ENCODE measurements at regions of chr3 and their contacts with region 1.

Region 1: GRCh38 chr3:178325330-178325729 is 210.9 kb upstream of the KCNMB2 start:
- DNase-seq: no peak
- H3K4me3 ChIP-seq: no peak overlapping the region
- H3K27ac ChIP-seq: peak overlapping the region in 2 of 4 donors; percentile 5 to 33
- H3K4me1 ChIP-seq: peaks cover 0 to 26% (median 19%) of the 10 kb centered on the region in 4 donors
- H3K27me3 ChIP-seq: no peaks in the 10 kb centered on the region
- CTCF ChIP-seq: peak in 2 of 4 experiments; percentile 36 to 47
- EP300 ChIP-seq: no peak
- POLR2A ChIP-seq: no peak

Region 2: GRCh38 chr3:177041021-177041729 is 1284.2 kb before region 1 on chr3:
- intact Hi-C with region 1: loop called (anchors 5 kb)
- DNase-seq: peak; percentile 84
- H3K4me3 ChIP-seq: no peak overlapping the region
- H3K27ac ChIP-seq: peak overlapping the region in 3 of 4 donors; percentile 78 to 79 (median 79)
- H3K4me1 ChIP-seq: peaks cover 0 to 42% (median 29%) of the 10 kb centered on the region in 4 donors
- H3K27me3 ChIP-seq: no peaks in the 10 kb centered on the region
- CTCF ChIP-seq: no peak
- EP300 ChIP-seq: no peak
- POLR2A ChIP-seq: no peak

Region 3: DNA sequence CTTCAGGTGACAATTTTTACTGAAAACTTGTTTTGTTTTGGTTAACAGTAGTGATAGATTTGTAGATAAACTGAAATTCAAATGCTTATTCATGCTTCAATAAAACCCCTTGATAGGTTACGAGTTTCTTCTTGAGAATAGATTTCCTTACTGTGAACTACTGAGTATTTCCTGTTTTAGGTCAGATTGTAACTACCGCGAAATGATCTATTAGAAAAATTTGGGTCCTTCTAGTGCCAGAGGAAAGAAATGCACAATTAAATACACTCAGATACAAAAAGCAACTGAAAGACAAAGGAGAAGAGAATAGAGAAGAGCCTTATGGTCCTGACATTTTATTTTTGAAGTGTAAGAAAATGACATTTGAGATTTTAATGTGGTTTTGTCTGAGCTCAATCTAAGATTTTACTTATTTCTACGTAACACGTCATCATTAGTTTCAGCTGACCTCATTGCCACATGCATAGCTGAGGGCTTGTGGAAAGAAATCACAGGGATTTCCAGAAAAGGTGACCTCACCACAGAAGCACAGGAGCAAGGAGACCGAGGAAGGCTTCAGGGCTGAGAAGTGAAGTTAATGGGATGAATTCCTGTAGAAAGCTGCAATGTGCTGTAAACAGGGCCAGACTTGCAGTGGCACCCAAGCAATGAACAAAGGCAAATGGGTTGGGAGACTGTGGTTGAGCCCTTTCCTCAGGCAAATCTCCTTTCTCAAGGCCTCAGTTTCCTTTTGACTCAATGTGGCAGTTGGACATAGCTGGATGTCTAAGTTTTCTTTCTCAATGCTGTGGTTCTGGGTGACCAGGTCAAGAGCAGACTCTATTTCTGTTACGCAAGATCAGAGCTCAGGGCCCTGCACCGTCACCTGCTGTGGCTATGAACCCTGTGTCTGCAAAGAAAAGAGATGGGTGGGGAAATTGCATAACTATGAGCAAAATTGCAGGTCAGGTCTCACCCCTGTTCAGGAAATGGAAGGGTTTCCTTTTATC is 876.0 kb before region 1 on chr3:
- intact Hi-C with region 1: loop called (anchors 10 kb)
- DNase-seq: no peak
- H3K4me3 ChIP-seq: no peak overlapping the region
- H3K27ac ChIP-seq: peak overlapping the region; percentile 69 to 88 (median 76)
- H3K4me1 ChIP-seq: peaks cover 2 to 73% (median 61%) of the 10 kb centered on the region in 4 donors
- H3K27me3 ChIP-seq: no peaks in the 10 kb centered on the region
- CTCF ChIP-seq: no peak
- EP300 ChIP-seq: no peak
- POLR2A ChIP-seq: no peak

Region 4: GRCh38 chr3:177835008-177835407 is 490.3 kb before region 1 on chr3:
- intact Hi-C with region 1: loop called (anchors 10 kb)
- DNase-seq: no peak
- H3K4me3 ChIP-seq: no peak overlapping the region
- H3K27ac ChIP-seq: peak overlapping the region in 2 of 4 donors; percentile 43 to 66
- H3K4me1 ChIP-seq: peaks cover 0 to 47% (median 34%) of the 10 kb centered on the region in 4 donors
- H3K27me3 ChIP-seq: no peaks in the 10 kb centered on the region
- CTCF ChIP-seq: no peak
- EP300 ChIP-seq: no peak
- POLR2A ChIP-seq: no peak

Region 5: DNA sequence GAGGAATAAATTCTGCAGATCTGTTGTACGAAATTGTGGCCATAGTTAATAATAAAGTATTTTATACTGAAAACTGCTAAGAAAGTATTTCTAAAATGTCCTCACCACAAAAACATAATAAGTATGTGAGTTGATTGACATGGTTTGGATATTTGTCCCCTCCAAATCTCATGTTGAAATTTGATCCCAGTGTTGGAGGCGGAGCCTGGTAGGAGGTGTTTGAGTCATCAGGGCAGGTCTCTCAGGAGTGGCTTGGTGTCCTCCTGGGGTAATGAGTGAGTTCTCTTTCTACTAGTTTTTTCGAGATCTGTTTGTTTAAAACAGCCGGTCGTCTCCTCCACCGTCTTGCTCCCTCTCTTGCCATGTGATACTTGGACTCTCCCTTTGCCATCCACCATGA is 213.2 kb before region 1 on chr3:
- intact Hi-C with region 1: no loop called
- DNase-seq: no peak
- H3K4me3 ChIP-seq: no peak overlapping the region
- H3K27ac ChIP-seq: no peak overlapping the region
- H3K4me1 ChIP-seq: peaks cover 0 to 22% (median 2%) of the 10 kb centered on the region in 4 donors
- H3K27me3 ChIP-seq: no peaks in the 10 kb centered on the region
- CTCF ChIP-seq: no peak
- EP300 ChIP-seq: no peak
- POLR2A ChIP-seq: no peak

Measured in sigmoid colon (tissue), 7 donors.